Psoas muscle (tissue), 8 donors: ENCODE measurements at regions of chr9 and their contacts with region 1.

Region 1: DNA sequence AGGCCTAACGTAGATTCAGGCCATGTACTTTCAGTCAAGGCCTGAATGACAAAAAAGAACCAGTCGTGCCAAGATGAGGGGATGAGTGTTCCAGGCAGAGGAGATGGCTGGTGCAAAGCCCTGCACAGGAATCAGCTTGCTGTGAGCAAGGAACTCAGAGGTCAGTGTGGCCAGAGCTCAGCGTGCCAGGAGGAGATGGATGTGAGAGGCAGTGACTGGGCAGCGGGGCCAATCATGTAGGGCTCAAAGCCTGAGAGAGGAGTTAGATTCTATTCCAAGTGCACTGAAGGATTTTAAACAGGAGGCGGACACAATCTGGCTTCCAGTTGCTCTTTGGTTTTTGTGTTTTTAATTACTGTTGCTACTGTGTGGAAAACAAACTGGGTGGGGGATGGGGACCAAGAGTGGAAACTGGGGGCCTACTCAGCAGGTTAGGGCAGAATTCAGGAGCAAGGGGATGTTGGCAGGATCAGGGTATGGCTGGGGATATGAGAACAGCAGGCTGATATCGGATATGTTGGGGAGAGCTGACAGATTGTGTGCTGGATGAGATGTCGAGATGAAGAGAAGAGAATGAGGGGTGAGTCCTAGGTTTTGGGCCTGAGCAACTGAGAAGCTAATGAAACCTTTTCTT is 64.3 kb downstream of the ANGPTL2 start:
- DNase-seq: peak; percentile 43 to 76
- ATAC-seq: peak; percentile 77 to 89 (median 88)
- H3K4me3 ChIP-seq: no peak overlapping the region
- H3K27ac ChIP-seq: peak overlapping the region; percentile 63
- H3K4me1 ChIP-seq: peaks cover 40% of the 10 kb centered on the region
- H3K27me3 ChIP-seq: no peaks in the 10 kb centered on the region
- CTCF ChIP-seq: no peak

Region 2: DNA sequence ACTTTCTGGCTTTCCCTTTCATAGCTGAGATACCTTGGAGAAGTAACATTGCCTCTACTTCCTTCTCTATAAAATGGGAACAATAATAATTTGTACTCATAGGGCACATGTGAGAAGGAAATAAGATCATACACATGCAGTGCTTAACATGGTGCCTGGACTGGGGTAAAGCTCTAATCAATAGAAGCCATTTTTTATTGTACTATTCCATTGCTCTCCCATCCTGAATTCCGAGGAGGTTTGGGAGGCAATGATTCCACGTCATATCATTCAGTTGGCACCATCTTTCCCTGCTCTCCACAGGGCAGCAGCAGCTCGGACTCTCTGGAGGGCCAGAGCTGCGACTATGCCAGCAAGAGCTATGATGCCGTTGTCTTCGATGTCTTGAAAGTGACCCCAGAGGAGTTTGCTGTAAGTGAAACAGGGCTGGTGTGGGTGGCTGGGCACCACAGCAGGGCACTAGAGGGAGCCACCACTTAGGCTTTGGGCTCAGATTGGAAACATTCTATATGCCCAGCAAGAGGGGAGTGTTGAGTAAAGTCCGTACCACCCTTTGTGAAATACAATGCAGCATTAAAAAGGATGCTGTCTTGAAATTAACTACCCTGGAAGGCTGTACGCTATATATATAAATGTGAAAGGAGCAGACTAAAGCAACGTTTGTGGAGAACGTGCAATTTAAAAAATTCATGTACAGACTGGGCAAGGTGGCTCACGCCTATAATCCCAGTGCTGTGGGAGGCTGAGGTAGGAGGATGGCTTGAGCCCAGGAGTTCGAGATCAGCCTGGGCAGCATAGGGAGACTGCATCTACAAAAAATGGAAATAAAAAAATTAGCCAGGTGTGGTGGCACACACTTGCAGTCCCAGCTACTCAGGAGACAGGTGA is 92.3 kb before region 1 on chr9:
- intact Hi-C with region 1: loop called in 1 of 2 experiments (anchors 5 kb)
- DNase-seq: peak; percentile 39 to 68
- ATAC-seq: peak; percentile 84 to 92 (median 88)
- H3K4me3 ChIP-seq: no peak overlapping the region
- H3K27ac ChIP-seq: no peak overlapping the region
- H3K4me1 ChIP-seq: peaks cover 24% of the 10 kb centered on the region
- H3K27me3 ChIP-seq: no peaks in the 10 kb centered on the region
- CTCF ChIP-seq: peak; percentile 83